OCI-LY7 (cell line): ENCODE measurements at regions of chr7 and their contacts with region 1.

Region 1: GRCh38 chr7:2325162-2325561 is 10.9 kb upstream of the SNX8 start:
- DNase-seq: no peak
- H3K4me3 ChIP-seq: no peak overlapping the region
- H3K27ac ChIP-seq: no peak overlapping the region
- H3K4me1 ChIP-seq: no peaks in the 10 kb centered on the region
- CTCF ChIP-seq: no peak

Region 2: GRCh38 chr7:1520574-1521234 is 804.5 kb before region 1 on chr7:
- CTCF ChIA-PET with region 1: no interaction called
- POLR2A ChIA-PET with region 1: interaction called, 10 read pairs
- intact Hi-C with region 1: no loop called
- DNase-seq: no peak
- H3K4me3 ChIP-seq: no peak overlapping the region
- H3K27ac ChIP-seq: no peak overlapping the region
- H3K4me1 ChIP-seq: peaks cover 12% of the 10 kb centered on the region
- CTCF ChIP-seq: no peak